Ovary (tissue), 10 donors: ENCODE measurements at regions of chr19 and their contacts with region 1.

Region 1: DNA sequence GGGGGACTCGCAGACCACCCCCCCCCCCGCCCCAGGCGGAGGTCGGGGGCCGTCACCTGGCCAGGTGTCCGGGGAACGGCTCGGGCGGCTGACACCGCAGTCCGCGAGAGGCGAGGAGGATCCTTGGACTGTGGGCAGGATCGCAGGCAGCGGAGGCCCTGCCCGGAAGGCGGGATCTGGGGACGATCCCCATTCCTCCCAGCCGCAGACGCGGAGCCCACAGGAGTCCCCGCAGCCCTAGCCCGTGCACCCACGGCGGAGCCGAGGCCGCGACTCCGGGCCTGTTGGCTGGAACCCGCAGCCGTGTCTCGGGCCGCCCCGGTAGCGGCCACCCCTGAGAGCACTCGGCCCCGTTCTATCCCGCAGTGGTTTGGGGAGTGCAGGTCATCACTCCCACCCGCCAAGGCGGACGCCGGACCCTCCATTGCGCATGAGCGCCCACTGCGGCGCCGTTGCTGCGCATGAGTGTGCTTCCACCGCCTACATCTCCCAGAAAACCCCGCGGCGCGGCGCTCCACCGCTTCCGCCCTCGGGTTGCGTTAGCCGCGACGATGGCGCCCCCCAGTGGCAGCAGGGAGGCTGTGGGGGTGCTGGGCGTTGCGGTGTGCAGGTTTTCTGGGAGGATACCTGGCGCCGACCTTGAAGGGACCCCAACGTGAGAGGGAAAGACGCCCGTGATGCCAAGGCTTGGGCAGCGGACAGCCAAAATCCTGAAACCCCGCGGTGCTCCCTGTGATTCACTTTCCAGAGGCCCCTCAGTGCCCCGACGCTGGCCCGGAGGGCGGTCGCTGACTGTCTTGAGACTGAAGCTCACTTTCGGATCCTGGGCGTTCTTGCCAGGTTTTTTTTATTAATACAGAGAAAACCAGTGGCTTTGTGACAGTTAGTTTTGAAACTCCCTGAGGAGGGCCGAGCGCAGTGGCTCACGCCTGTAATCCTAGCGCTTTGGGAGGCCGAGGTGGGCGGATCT is 4.4 kb upstream of the ZNF329 start:
- DNase-seq: peak; percentile 96 to 99 (median 99)
- H3K4me3 ChIP-seq: peak overlapping the region; percentile 86
- H3K27ac ChIP-seq: peak overlapping the region; percentile 51 to 79
- H3K4me1 ChIP-seq: peaks cover 9% of the 10 kb centered on the region
- H3K27me3 ChIP-seq: no peaks in the 10 kb centered on the region
- CTCF ChIP-seq: peak; percentile 85 to 99 (median 99)
- EP300 ChIP-seq: no peak
- POLR2A ChIP-seq: peak; percentile 71

Region 2: DNA sequence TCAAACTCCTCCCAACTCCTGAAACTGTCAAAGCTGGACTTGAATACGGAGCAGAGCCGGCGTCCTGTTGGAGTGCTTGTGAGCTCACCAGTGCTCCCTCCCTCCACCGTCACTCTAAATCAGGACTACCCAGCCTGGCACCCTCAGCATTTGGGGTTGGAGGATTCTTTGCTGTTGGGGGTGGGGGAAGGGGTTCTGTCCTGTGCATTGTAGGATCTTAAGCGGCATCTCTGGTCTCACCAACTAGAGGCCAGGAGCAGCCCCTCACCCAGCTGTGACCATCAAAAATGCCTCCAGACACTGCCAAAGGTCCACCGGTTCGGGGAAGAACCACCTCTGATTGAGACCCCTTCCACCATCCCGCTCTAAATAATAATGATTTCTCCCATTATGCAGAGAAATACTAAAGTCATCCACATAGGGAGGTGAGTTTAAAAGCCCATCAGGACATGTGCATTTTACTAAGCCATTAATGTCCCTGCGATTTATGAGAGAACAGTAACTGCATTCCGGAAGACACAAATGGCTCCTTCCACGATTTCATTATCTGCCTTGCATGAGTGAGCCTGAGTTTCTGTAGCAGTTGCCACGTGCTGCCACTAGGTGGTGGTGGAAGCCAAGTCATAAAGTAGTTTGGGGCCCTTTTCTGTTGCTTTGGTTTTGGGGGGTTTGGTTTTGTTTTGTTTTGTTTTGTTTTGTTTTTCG is 1051.2 kb before region 1 on chr19:
- intact Hi-C with region 1: loop called in 3 of 4 experiments (anchors 10 kb)
- DNase-seq: peak; percentile 49 to 76 (median 72)
- H3K4me3 ChIP-seq: no peak overlapping the region
- H3K27ac ChIP-seq: no peak overlapping the region
- H3K4me1 ChIP-seq: no peaks in the 10 kb centered on the region
- H3K27me3 ChIP-seq: no peaks in the 10 kb centered on the region
- CTCF ChIP-seq: peak; percentile 40 to 84 (median 72)
- EP300 ChIP-seq: no peak
- POLR2A ChIP-seq: no peak

Region 3: GRCh38 chr19:57746580-57747471 is 408.1 kb before region 1 on chr19 and contains the start of gene ZNF776:
- intact Hi-C with region 1: loop called in 1 of 4 experiments (anchors 10 kb)
- DNase-seq: peak; percentile 78 to 84 (median 81)
- H3K4me3 ChIP-seq: peak within 1 kb of the TSS; percentile 74
- H3K27ac ChIP-seq: peak within 1 kb of the TSS; percentile 40 to 46
- H3K4me1 ChIP-seq: peaks cover 6% of the 10 kb centered on the region
- H3K27me3 ChIP-seq: no peaks in the 10 kb centered on the region
- CTCF ChIP-seq: no peak
- EP300 ChIP-seq: no peak
- POLR2A ChIP-seq: no peak
- total RNA-seq, gene ZNF776: 11.0 to 25.9 (median 14.6) TPM

Region 4: GRCh38 chr19:58002384-58003173 is 152.4 kb before region 1 on chr19 and contains the start of gene ZNF606:
- intact Hi-C with region 1: loop called in 1 of 4 experiments (anchors 10 kb)
- DNase-seq: peak; percentile 83 to 91 (median 86)
- H3K4me3 ChIP-seq: peak within 1 kb of the TSS; percentile 90
- H3K27ac ChIP-seq: peak within 1 kb of the TSS; percentile 72 to 86
- H3K4me1 ChIP-seq: peaks cover 10% of the 10 kb centered on the region
- H3K27me3 ChIP-seq: no peaks in the 10 kb centered on the region
- CTCF ChIP-seq: no peak
- EP300 ChIP-seq: no peak
- POLR2A ChIP-seq: peak; percentile 83
- total RNA-seq, gene ZNF606: 13.4 to 38.1 (median 28.0) TPM

Region 5: DNA sequence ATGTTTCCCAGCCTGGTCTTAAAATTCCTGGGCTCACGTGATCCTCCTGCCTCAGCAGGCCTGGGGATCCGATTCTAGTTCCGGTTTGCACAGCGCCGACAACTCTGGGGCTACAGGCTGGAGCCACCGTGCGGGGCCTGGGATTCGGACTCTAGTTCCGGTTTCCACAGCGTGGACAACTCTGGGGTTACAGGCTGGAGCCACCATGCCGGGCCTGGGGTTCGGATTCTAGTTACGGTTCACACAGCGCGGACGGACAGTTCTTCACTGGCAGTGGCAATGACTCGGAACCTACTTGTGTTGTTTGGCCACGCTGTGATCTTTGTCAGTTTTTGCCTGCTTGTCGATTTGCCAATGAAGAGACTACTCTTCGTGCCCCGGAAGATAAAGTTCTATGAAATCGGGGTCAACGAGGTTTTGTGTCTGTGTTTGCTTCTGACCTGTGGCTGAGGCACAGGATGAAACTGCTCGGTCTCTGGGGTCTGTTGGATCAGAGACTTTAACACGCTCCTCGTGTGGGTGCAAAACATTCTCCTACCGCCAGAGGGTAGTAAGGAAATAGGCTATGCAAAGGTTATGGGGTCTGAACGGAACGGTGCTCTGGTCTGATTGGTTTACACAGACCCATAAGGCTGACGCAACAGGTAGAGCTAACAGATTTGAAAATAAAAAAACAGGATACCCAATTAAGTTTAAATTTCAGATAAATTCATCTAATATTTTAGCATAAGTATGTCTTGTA is 133.3 kb before region 1 on chr19:
- intact Hi-C with region 1: loop called in 2 of 4 experiments (anchors 2 to 10 kb)
- DNase-seq: peak in 3 of 5 donors; percentile 36 to 48 (median 46)
- H3K4me3 ChIP-seq: no peak overlapping the region
- H3K27ac ChIP-seq: no peak overlapping the region
- H3K4me1 ChIP-seq: no peaks in the 10 kb centered on the region
- H3K27me3 ChIP-seq: no peaks in the 10 kb centered on the region
- CTCF ChIP-seq: peak in 1 of 3 donors; percentile 54
- EP300 ChIP-seq: no peak
- POLR2A ChIP-seq: no peak

Region 6: GRCh38 chr19:58091251-58091995 is 63.5 kb before region 1 on chr19:
- intact Hi-C with region 1: no loop called
- DNase-seq: no peak
- H3K4me3 ChIP-seq: no peak overlapping the region
- H3K27ac ChIP-seq: no peak overlapping the region
- H3K4me1 ChIP-seq: no peaks in the 10 kb centered on the region
- H3K27me3 ChIP-seq: no peaks in the 10 kb centered on the region
- CTCF ChIP-seq: no peak
- EP300 ChIP-seq: no peak
- POLR2A ChIP-seq: no peak